BJ (cell line): ENCODE measurements at regions of chr9 and their contacts with region 1.

Region 1: DNA sequence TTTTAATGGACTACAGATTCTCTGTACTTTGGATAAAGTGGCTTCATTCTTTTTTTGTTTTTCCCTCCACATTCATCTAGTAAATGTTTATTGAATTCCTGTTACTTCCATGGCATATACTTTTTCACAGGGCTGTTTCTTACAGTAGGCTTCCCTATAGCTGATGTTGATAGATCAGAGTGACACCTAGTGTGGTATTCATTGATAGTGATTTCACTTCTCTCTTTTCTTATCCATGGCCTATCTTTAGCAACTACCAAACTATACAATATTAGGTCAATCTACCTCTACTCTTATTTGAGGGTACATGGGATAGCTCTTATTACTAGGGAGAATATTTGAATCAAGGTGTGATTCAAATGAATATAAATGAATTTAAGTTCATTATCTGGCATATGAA is 35.8 kb downstream of the FSD1L start:
- DNase-seq: no peak
- H3K4me3 ChIP-seq: no peak overlapping the region
- H3K27me3 ChIP-seq: no peaks in the 10 kb centered on the region
- CTCF ChIP-seq: no peak

Region 2: DNA sequence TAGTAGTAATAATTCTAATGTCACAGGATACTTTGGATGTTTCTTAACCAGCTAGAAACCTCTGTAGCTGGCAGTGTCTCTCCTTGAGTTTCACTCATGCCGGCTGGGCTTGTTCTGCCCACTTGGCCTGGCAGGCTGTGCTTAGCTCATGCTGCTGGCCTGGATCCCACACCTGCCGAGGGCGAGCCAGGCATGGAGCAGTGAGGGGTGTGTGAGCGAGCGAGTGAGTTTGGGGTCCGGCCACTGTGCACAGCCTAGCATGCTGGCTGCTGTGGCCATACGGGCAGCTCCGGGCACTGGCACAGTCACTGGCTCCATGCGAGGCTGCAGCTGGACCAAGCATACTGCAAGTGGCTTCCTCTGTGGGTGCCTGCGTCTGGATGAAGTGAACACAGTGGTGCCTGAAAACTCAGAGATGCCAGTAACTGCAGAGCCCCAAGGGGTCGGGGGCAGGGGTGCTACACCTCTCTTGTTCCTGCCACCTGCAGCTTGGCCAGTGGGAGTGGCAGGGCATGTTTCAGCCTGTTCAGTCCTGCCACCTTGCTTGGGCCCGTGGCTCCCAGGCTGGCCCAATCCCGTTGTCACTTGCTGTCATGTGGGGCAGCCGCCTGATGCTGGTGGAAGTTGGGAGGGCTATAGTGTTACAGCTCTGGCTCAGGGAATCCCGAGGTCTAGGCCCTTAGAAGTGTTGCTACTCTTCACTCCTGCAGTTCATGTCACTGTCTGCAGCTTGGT is 25.9 kb before region 1 on chr9:
- CTCF ChIA-PET with region 1: no interaction called
- POLR2A ChIA-PET with region 1: interaction called, 13 read pairs
- DNase-seq: no peak
- H3K4me3 ChIP-seq: no peak overlapping the region
- H3K27me3 ChIP-seq: no peaks in the 10 kb centered on the region
- CTCF ChIP-seq: no peak

Region 3: GRCh38 chr9:105500108-105500766 is 16.6 kb after region 1 on chr9:
- CTCF ChIA-PET with region 1: no interaction called
- POLR2A ChIA-PET with region 1: no interaction called
- DNase-seq: no peak
- H3K4me3 ChIP-seq: no peak overlapping the region
- H3K27me3 ChIP-seq: no peaks in the 10 kb centered on the region
- CTCF ChIP-seq: no peak

Region 4: GRCh38 chr9:106066940-106067524 is 583.4 kb after region 1 on chr9:
- CTCF ChIA-PET with region 1: no interaction called
- POLR2A ChIA-PET with region 1: no interaction called
- DNase-seq: no peak
- H3K4me3 ChIP-seq: no peak overlapping the region
- H3K27me3 ChIP-seq: no peaks in the 10 kb centered on the region
- CTCF ChIP-seq: no peak